B cell (primary cell): ENCODE measurements at regions of chr12 and their contacts with region 1.

Region 1: GRCh38 chr12:120228291-120229070 is 27.6 kb upstream of the RPLP0 start:
- DNase-seq: peak; percentile 89
- ATAC-seq: peak; percentile 96
- H3K4me3 ChIP-seq: no peak overlapping the region
- H3K4me3 Mint-ChIP-seq: peak overlapping the region; percentile 12
- H3K27ac ChIP-seq: no peak overlapping the region
- H3K27ac Mint-ChIP-seq: no peak overlapping the region
- H3K4me1 ChIP-seq: peaks cover 59 to 61% of the 10 kb centered on the region in 2 donors
- H3K4me1 Mint-ChIP-seq: peaks cover 43% of the 10 kb centered on the region
- H3K27me3 ChIP-seq: peaks cover 0 to 80% (median 40%) of the 10 kb centered on the region in 4 experiments
- H3K27me3 Mint-ChIP-seq: peaks cover 33% of the 10 kb centered on the region
- CTCF ChIP-seq: peak; percentile 88

Region 2: DNA sequence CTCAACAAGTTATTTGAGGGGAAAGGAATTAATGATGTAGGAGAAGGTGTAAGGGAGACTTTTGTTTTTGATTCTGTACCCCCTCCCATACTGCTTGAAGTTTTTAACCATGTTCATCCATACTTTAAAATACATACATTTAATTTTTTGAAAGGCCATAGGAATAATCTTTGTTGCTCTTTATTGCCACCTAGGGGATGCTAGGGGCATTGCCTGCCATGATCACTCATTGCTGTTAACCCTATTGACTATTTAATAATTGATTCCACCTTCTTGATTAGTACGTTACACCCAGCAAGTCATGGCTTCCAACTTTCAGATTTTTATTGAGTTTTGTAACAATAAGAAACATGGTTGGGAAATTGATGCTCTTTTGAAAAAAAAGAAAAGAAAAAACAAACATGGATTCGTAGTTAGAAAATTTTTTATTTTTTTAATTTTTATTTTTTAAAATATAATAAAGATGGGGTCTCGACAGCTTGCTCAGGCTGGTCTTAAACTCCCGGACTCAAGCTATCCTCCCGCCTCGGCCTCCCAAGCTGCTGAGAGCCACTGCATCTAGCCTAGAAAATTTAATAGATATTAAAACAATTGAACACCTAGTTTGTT is 569.1 kb before region 1 on chr12:
- CTCF ChIA-PET with region 1: no interaction called
- POLR2A ChIA-PET with region 1: no interaction called
- intact Hi-C with region 1: no loop called
- DNase-seq: peak; percentile 59
- ATAC-seq: peak; percentile 81
- H3K4me3 ChIP-seq: no peak overlapping the region
- H3K4me3 Mint-ChIP-seq: no peak overlapping the region
- H3K27ac ChIP-seq: no peak overlapping the region
- H3K27ac Mint-ChIP-seq: no peak overlapping the region
- H3K4me1 ChIP-seq: no peaks in the 10 kb centered on the region
- H3K4me1 Mint-ChIP-seq: no peaks in the 10 kb centered on the region
- H3K27me3 ChIP-seq: no peaks in the 10 kb centered on the region
- H3K27me3 Mint-ChIP-seq: no peaks in the 10 kb centered on the region
- CTCF ChIP-seq: peak; percentile 98

Region 3: GRCh38 chr12:119902084-119902509 is 326.4 kb before region 1 on chr12:
- CTCF ChIA-PET with region 1: no interaction called
- POLR2A ChIA-PET with region 1: no interaction called
- intact Hi-C with region 1: no loop called
- DNase-seq: peak; percentile 72
- ATAC-seq: peak; percentile 81
- H3K4me3 ChIP-seq: no peak overlapping the region
- H3K4me3 Mint-ChIP-seq: no peak overlapping the region
- H3K27ac ChIP-seq: no peak overlapping the region
- H3K27ac Mint-ChIP-seq: no peak overlapping the region
- H3K4me1 ChIP-seq: no peaks in the 10 kb centered on the region
- H3K4me1 Mint-ChIP-seq: peaks cover 2% of the 10 kb centered on the region
- H3K27me3 ChIP-seq: peaks cover 0 to 5% (median 0%) of the 10 kb centered on the region in 4 experiments
- H3K27me3 Mint-ChIP-seq: no peaks in the 10 kb centered on the region
- CTCF ChIP-seq: peak; percentile 92

Region 4: GRCh38 chr12:119931402-119931801 is 297.1 kb before region 1 on chr12:
- CTCF ChIA-PET with region 1: no interaction called
- POLR2A ChIA-PET with region 1: no interaction called
- intact Hi-C with region 1: no loop called
- DNase-seq: no peak
- ATAC-seq: no peak
- H3K4me3 ChIP-seq: no peak overlapping the region
- H3K4me3 Mint-ChIP-seq: no peak overlapping the region
- H3K27ac ChIP-seq: no peak overlapping the region
- H3K27ac Mint-ChIP-seq: no peak overlapping the region
- H3K4me1 ChIP-seq: no peaks in the 10 kb centered on the region
- H3K4me1 Mint-ChIP-seq: no peaks in the 10 kb centered on the region
- H3K27me3 ChIP-seq: no peaks in the 10 kb centered on the region
- H3K27me3 Mint-ChIP-seq: peaks cover 12% of the 10 kb centered on the region
- CTCF ChIP-seq: no peak

Region 5: DNA sequence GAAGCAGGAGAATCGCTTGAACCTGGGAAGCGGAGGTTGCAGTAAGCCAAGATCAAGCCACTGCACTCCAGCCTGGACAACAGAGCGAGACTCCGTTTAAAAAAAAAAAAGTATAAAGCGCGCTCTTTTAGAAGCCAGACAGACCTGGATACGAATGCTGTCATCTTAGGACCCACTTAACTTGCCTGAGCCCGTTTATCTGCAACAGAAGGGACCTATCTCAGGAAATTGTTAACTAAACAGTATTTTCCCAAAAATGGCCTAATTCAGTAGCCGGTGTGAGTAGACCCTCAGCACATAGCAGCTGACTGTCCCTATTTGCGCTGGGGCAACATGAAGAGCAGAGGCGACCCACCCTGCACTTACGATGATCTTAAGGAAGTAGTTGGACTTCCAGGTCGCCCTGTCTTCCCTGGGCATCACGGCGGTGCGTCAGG is 28.1 kb before region 1 on chr12:
- CTCF ChIA-PET with region 1: interaction called, 24 read pairs
- POLR2A ChIA-PET with region 1: interaction called, 9 read pairs
- intact Hi-C with region 1: no loop called
- DNase-seq: no peak
- ATAC-seq: no peak
- H3K4me3 ChIP-seq: peak overlapping the region; percentile 61 to 98 (median 93)
- H3K4me3 Mint-ChIP-seq: peak overlapping the region; percentile 95
- H3K27ac ChIP-seq: peak overlapping the region; percentile 49 to 80
- H3K27ac Mint-ChIP-seq: peak overlapping the region; percentile 100
- H3K4me1 ChIP-seq: peaks cover 22 to 29% of the 10 kb centered on the region in 2 donors
- H3K4me1 Mint-ChIP-seq: peaks cover 25% of the 10 kb centered on the region
- H3K27me3 ChIP-seq: no peaks in the 10 kb centered on the region
- H3K27me3 Mint-ChIP-seq: no peaks in the 10 kb centered on the region
- CTCF ChIP-seq: no peak

Region 6: GRCh38 chr12:120242275-120242799 is 13.9 kb after region 1 on chr12:
- CTCF ChIA-PET with region 1: interaction called, 48 read pairs
- POLR2A ChIA-PET with region 1: no interaction called
- intact Hi-C with region 1: no loop called
- DNase-seq: no peak
- ATAC-seq: no peak
- H3K4me3 ChIP-seq: no peak overlapping the region
- H3K4me3 Mint-ChIP-seq: no peak overlapping the region
- H3K27ac ChIP-seq: no peak overlapping the region
- H3K27ac Mint-ChIP-seq: no peak overlapping the region
- H3K4me1 ChIP-seq: no peaks in the 10 kb centered on the region
- H3K4me1 Mint-ChIP-seq: no peaks in the 10 kb centered on the region
- H3K27me3 ChIP-seq: peaks cover 0 to 79% (median 47%) of the 10 kb centered on the region in 4 experiments
- H3K27me3 Mint-ChIP-seq: peaks cover 64% of the 10 kb centered on the region
- CTCF ChIP-seq: no peak

Region 7: DNA sequence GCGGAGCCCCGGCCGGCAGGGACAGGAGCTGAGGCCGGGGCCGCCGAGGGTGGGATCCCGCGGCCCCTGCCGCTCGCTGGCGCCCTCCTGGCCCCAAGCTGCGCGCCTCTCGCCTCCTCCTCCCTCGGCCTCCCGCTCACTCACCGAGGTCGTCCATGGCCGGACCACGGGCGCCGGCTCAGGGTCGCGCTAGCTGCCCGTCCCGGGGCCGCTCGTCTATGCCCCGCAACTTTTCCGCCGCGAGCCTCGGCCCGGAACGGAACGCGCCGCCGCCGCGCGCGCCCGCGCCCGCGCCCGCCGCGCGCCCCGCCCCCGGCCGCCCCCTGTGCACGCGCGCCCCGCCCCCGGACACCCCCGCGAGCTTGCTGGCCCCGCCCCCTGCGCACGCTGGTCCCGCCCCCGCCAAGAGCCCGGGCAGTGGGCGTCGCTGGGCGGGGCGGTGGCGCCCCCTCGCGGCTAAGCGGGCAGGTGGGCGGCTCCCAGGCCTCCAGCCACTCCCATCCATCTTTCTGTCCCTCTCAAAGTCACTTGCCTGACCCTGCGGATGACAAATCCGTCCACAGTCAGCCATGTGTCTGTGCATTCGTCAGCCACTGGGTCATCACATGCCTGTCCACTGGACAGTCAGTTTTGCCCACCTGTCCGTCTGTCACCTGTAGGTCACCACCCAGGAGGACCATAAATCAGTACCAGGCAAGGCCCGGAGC is 37.1 kb after region 1 on chr12 and contains the start of gene PXN:
- CTCF ChIA-PET with region 1: interaction called, 313 read pairs
- POLR2A ChIA-PET with region 1: interaction called, 15 read pairs
- intact Hi-C with region 1: loop called (anchors 1 kb)
- DNase-seq: peak; percentile 85
- ATAC-seq: peak; percentile 96
- H3K4me3 ChIP-seq: peak within 1 kb of the TSS; percentile 40 to 66 (median 60)
- H3K4me3 Mint-ChIP-seq: peak within 1 kb of the TSS; percentile 94
- H3K27ac ChIP-seq: no peak within 1 kb of the TSS
- H3K27ac Mint-ChIP-seq: peak within 1 kb of the TSS; percentile 70
- H3K4me1 ChIP-seq: peaks cover 28 to 35% of the 10 kb centered on the region in 2 donors
- H3K4me1 Mint-ChIP-seq: peaks cover 24% of the 10 kb centered on the region
- H3K27me3 ChIP-seq: peaks cover 0 to 74% (median 34%) of the 10 kb centered on the region in 4 experiments
- H3K27me3 Mint-ChIP-seq: peaks cover 40% of the 10 kb centered on the region
- CTCF ChIP-seq: peak; percentile 75
- total RNA-seq, gene PXN: 2.0 and 2.8 TPM in 2 replicates

Region 8: DNA sequence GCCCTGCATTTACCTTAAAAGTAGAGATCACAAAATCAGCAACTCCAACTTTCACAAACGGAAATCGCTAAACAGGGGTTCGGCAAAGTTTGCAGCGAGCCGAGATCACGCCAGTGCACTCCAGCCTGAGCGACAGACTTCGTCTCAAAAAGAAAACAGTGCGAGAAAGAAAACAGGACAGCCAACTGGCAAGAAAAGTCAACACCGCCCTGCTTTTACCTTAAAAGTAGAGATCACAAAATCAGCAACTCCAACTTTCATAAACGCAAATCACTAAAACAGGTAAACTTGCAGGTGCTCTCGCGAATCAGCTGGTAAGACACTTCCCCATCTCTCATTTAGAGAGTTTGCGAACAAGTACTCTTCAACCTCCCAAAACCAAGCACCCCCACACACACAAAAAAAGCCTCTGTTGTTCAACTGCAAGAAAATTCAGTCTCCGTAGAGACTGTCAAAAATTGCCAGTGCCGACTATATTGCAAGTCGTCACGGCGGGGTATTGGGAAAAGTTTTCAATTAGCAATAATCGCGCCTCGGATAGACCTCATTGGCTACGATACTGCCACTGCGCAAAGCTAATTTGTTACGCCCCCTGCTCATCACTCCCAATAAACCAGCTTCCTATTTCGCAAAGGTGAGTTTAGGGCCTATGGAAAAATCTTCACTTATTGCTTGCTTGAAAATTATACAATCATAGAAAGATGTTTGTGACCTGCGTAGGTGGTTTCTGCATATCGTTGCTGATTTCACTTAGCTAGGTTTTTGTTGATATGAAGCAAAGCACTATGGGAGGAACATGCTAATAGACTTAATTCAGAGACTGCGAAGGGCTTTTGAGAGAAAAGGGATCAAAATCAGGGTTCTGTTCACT is 64.4 kb after region 1 on chr12 and contains the start of gene RNU4-1:
- CTCF ChIA-PET with region 1: interaction called, 22 read pairs
- POLR2A ChIA-PET with region 1: interaction called, 12 read pairs
- intact Hi-C with region 1: loop called (anchors 1 kb)
- DNase-seq: peak; percentile 94
- ATAC-seq: peak; percentile 59
- H3K4me3 ChIP-seq: peak within 1 kb of the TSS; percentile 61 to 87 (median 82)
- H3K4me3 Mint-ChIP-seq: no peak within 1 kb of the TSS
- H3K27ac ChIP-seq: peak within 1 kb of the TSS; percentile 99
- H3K27ac Mint-ChIP-seq: no peak within 1 kb of the TSS
- H3K4me1 ChIP-seq: peaks cover 14 to 20% of the 10 kb centered on the region in 2 donors
- H3K4me1 Mint-ChIP-seq: peaks cover 13% of the 10 kb centered on the region
- H3K27me3 ChIP-seq: no peaks in the 10 kb centered on the region
- H3K27me3 Mint-ChIP-seq: no peaks in the 10 kb centered on the region
- CTCF ChIP-seq: no peak
- total RNA-seq, gene RNU4-1: 3,269 and 3,426 TPM in 2 replicates

Region 9: GRCh38 chr12:120356567-120357030 is 128.1 kb after region 1 on chr12:
- CTCF ChIA-PET with region 1: interaction called, 5 read pairs
- POLR2A ChIA-PET with region 1: no interaction called
- intact Hi-C with region 1: loop called (anchors 1 kb)
- DNase-seq: peak; percentile 78
- ATAC-seq: peak; percentile 73
- H3K4me3 ChIP-seq: no peak overlapping the region
- H3K4me3 Mint-ChIP-seq: no peak overlapping the region
- H3K27ac ChIP-seq: no peak overlapping the region
- H3K27ac Mint-ChIP-seq: no peak overlapping the region
- H3K4me1 ChIP-seq: peaks cover 0 to 6% of the 10 kb centered on the region in 2 donors
- H3K4me1 Mint-ChIP-seq: peaks cover under 1% of the 10 kb centered on the region
- H3K27me3 ChIP-seq: peaks cover 0 to 20% (median 8%) of the 10 kb centered on the region in 4 experiments
- H3K27me3 Mint-ChIP-seq: peaks cover 52% of the 10 kb centered on the region
- CTCF ChIP-seq: peak; percentile 84

Region 10: DNA sequence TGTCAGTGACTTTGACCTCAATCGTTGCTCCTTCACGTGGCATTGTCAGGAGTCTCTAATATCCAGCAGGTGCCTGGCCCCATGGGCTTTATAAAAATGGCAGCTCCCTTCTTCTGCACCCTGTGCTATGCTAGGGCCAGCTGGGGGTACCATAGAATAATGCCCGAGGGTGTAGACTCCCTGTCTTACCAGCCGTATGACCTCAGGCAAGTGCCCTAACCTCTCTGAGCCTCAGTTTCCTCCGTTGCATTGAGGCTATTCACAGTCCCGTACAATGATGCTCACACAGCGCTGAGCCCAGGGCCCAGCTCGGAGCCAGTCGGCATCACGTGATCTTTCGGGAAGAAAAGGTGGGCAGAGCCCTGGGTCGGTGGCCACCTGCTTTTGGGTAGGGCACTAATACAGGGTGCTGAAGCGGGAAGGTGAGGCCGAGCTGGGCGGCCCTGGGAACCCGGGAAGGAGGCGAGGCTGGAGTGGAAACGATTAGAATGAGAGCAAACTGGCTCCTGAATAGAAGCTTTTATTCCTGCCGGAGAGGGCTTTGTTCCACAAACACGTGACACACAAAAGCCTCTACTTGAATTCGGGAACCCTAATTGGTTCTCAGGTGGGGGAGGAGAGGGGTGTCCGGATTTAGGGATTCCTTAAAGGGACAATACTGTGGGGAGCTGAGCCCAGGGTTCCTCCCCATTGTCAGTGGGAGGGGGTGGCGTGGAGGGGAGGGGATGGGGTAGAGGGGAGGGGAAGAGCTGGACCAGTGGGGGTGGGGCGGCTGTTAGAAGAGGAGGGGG is 160.4 kb after region 1 on chr12:
- CTCF ChIA-PET with region 1: no interaction called
- POLR2A ChIA-PET with region 1: no interaction called
- intact Hi-C with region 1: no loop called
- DNase-seq: no peak
- ATAC-seq: no peak
- H3K4me3 ChIP-seq: no peak overlapping the region
- H3K4me3 Mint-ChIP-seq: no peak overlapping the region
- H3K27ac ChIP-seq: no peak overlapping the region
- H3K27ac Mint-ChIP-seq: no peak overlapping the region
- H3K4me1 ChIP-seq: peaks cover 0 to 5% of the 10 kb centered on the region in 2 donors
- H3K4me1 Mint-ChIP-seq: no peaks in the 10 kb centered on the region
- H3K27me3 ChIP-seq: peaks cover 0 to 22% (median 2%) of the 10 kb centered on the region in 4 experiments
- H3K27me3 Mint-ChIP-seq: peaks cover 41% of the 10 kb centered on the region
- CTCF ChIP-seq: no peak